Dorsolateral prefrontal cortex (tissue), 120 donors: ENCODE measurements at regions of chr14 and their contacts with region 1.

Region 1: GRCh38 chr14:98138666-98139065 is 1133.3 kb downstream of the BCL11B start:
- DNase-seq: peak in 1 of 10 donors; percentile 12
- H3K4me3 ChIP-seq: no peak overlapping the region
- H3K27ac ChIP-seq: no peak overlapping the region
- H3K27me3 ChIP-seq: peaks cover 0 to 83% (median 34%) of the 10 kb centered on the region in 45 donors
- CTCF ChIP-seq: peak; percentile 16 to 73 (median 63)

Region 2: GRCh38 chr14:97978341-97978740 is 160.3 kb before region 1 on chr14:
- intact Hi-C with region 1: loop called in 1 of 2 experiments (anchors 2 kb)
- DNase-seq: peak; percentile 68 to 89 (median 86)
- H3K4me3 ChIP-seq: peak overlapping the region in 58 of 59 donors; percentile 6 to 70 (median 46)
- H3K27ac ChIP-seq: peak overlapping the region in 45 of 59 donors; percentile 3 to 81 (median 64)
- H3K27me3 ChIP-seq: peaks cover 0 to 4% (median 0%) of the 10 kb centered on the region in 45 donors
- CTCF ChIP-seq: peak in 53 of 56 donors; percentile 15 to 71 (median 48)

Region 3: DNA sequence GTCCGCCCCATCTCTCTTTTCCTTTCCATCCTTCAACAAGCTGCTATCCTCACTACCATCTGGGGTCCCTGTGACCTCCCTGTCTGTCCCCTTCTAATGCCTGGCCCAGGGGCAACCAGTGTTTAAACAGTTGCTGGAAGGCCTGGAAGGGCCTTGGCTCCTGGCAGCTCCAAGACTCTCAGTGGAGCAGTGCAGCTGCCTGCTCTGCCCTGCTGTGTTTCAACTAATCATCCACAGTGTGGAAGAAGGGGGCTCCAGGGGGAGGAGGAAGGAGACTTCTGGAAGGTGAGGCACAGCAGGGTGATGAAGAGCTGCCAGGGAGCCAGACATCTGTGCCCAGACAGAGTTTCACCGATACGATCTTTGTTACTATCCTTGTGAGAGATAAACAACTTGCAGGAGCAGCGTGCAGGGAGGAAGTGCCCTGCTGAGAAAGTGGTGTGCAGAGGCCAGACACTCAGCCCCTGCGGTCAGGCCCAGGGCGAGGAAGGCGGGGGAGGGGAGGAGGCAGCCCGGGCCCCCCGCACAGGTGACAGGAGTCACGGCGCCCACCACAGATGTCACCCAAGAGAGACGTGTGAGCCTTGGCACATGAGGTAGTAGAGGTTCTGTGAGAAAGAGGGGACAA is 71.5 kb after region 1 on chr14:
- intact Hi-C with region 1: no loop called
- DNase-seq: no peak
- H3K4me3 ChIP-seq: no peak overlapping the region
- H3K27ac ChIP-seq: no peak overlapping the region
- H3K27me3 ChIP-seq: peaks cover 0 to 75% (median 19%) of the 10 kb centered on the region in 45 donors
- CTCF ChIP-seq: no peak

Region 4: GRCh38 chr14:98633380-98633779 is 494.7 kb after region 1 on chr14:
- intact Hi-C with region 1: loop called in 1 of 2 experiments (anchors 5 kb)
- DNase-seq: peak; percentile 33 to 92 (median 78)
- H3K4me3 ChIP-seq: peak overlapping the region in 37 of 59 donors; percentile 2 to 54 (median 30)
- H3K27ac ChIP-seq: peak overlapping the region in 16 of 59 donors; percentile 2 to 77 (median 58)
- H3K27me3 ChIP-seq: peaks cover 0 to 11% (median 0%) of the 10 kb centered on the region in 45 donors
- CTCF ChIP-seq: peak in 9 of 56 donors; percentile 5 to 32 (median 20)

Region 5: GRCh38 chr14:99199846-99200653 is 1061.4 kb after region 1 on chr14:
- intact Hi-C with region 1: loop called in 1 of 2 experiments (anchors 10 kb)
- DNase-seq: peak in 1 of 10 donors; percentile 92
- H3K4me3 ChIP-seq: peak overlapping the region in 1 of 59 donors; percentile 18
- H3K27ac ChIP-seq: peak overlapping the region in 6 of 59 donors; percentile 2 to 48 (median 30)
- H3K27me3 ChIP-seq: peaks cover 0 to 8% (median 0%) of the 10 kb centered on the region in 45 donors
- CTCF ChIP-seq: peak in 45 of 56 donors; percentile 11 to 64 (median 33)

Region 6: GRCh38 chr14:99266181-99267178 is 1127.8 kb after region 1 on chr14:
- intact Hi-C with region 1: loop called in 1 of 2 experiments (anchors 5 kb)
- DNase-seq: peak; percentile 71 to 89 (median 84)
- H3K4me3 ChIP-seq: peak overlapping the region in 47 of 59 donors; percentile 1 to 68 (median 28)
- H3K27ac ChIP-seq: peak overlapping the region in 2 of 59 donors; percentile 9 to 44
- H3K27me3 ChIP-seq: peaks cover 0 to 93% (median 52%) of the 10 kb centered on the region in 45 donors
- CTCF ChIP-seq: peak in 55 of 56 donors; percentile 92 to 100 (median 99)